OCI-LY7 (cell line): ENCODE measurements at regions of chr11 and their contacts with region 1.

Region 1: DNA sequence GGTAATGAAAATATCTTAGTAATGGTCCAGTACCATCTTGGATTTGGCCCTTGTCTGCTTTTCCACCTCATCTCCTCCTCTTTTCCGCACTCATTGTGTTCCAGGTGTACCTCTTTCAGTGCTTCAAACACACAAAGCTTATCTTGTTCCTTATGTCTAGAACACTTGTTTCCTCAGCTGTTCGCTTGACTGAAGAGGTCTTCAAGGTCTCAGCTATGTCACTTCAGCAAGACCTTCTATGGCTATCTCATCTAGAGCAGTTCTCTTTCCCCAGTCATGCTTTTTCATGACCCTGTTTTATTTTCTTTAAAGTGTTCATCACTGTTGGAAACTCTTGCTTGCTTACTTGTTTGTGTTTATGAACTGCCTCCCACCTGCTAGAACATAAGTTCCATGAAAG is 47.4 kb downstream of the UVRAG start:
- DNase-seq: no peak
- H3K4me3 ChIP-seq: no peak overlapping the region
- H3K27ac ChIP-seq: no peak overlapping the region
- H3K4me1 ChIP-seq: peaks cover 2% of the 10 kb centered on the region
- CTCF ChIP-seq: no peak

Region 2: DNA sequence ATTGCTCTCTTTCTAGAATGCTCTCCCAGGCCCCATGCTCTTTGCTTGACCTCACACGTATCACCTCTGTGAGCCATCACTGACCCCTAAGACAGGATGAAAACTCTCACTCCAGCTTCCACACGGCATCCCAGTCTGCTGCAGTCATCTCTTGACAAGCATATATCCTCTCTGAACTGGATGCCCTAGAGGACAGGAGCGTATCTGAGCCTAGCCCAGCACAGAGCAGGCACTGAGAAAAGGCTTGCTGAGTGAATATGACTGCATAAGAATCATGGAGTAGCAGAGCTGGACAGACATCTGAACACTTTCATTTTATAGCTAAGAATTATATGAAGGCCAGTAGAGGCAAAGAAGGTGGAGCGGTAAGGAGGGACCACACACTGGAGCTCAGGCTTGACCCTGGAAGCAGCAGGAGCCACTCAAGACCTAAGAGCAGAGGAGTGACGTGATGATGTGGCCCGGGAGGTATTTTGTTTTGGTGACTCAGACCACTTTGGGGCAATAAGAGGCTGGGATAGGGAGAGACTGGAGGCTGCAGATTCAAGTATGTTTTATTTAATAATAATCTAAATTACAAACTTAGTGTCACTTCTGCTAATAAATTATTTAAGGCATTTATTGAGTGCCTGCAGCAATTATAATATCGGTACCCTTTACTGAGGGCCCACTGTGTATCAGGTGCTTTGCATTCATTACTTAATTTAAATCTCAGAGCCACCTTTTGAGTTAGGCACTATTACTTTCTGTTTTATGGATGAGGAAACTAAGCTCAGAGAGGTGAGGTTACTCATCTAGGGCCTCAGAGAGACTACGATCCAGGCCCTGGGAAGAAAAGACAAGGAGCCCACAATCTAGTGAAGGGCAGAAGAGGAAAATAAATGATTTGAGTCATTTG is 236.2 kb before region 1 on chr11:
- CTCF ChIA-PET with region 1: no interaction called
- POLR2A ChIA-PET with region 1: no interaction called
- intact Hi-C with region 1: no loop called
- DNase-seq: no peak
- H3K4me3 ChIP-seq: no peak overlapping the region
- H3K27ac ChIP-seq: no peak overlapping the region
- H3K4me1 ChIP-seq: no peaks in the 10 kb centered on the region
- CTCF ChIP-seq: no peak

Region 3: GRCh38 chr11:75873417-75874221 is 11.2 kb after region 1 on chr11:
- CTCF ChIA-PET with region 1: no interaction called
- POLR2A ChIA-PET with region 1: interaction called, 14 read pairs
- intact Hi-C with region 1: no loop called
- DNase-seq: peak; percentile 68
- H3K4me3 ChIP-seq: peak overlapping the region; percentile 40
- H3K27ac ChIP-seq: peak overlapping the region; percentile 65
- H3K4me1 ChIP-seq: peaks cover 31% of the 10 kb centered on the region
- CTCF ChIP-seq: no peak

Region 4: GRCh38 chr11:76067099-76067498 is 204.7 kb after region 1 on chr11:
- CTCF ChIA-PET with region 1: no interaction called
- POLR2A ChIA-PET with region 1: no interaction called
- intact Hi-C with region 1: no loop called
- DNase-seq: no peak
- H3K4me3 ChIP-seq: no peak overlapping the region
- H3K27ac ChIP-seq: no peak overlapping the region
- H3K4me1 ChIP-seq: no peaks in the 10 kb centered on the region
- CTCF ChIP-seq: no peak